GM10248 (cell line): ENCODE measurements at regions of chr10 and their contacts with region 1.

Region 1: GRCh38 chr10:31864834-31865518 is 63.7 kb downstream of the ARHGAP12 start:
- DNase-seq: no peak
- CTCF ChIP-seq: no peak

Region 2: GRCh38 chr10:31739711-31740110 is 125.3 kb before region 1 on chr10:
- CTCF ChIA-PET with region 1: no interaction called
- POLR2A ChIA-PET with region 1: no interaction called
- DNase-seq: no peak
- CTCF ChIP-seq: no peak

Region 3: GRCh38 chr10:31851216-31851615 is 13.8 kb before region 1 on chr10:
- CTCF ChIA-PET with region 1: interaction called, 13 read pairs
- POLR2A ChIA-PET with region 1: no interaction called
- DNase-seq: no peak
- CTCF ChIP-seq: no peak

Region 4: GRCh38 chr10:31875608-31876007 is 10.6 kb after region 1 on chr10:
- CTCF ChIA-PET with region 1: interaction called, 23 read pairs
- POLR2A ChIA-PET with region 1: no interaction called
- DNase-seq: no peak
- CTCF ChIP-seq: no peak

Region 5: GRCh38 chr10:31928549-31929260 is 63.7 kb after region 1 on chr10 and contains the start of gene ARHGAP12:
- CTCF ChIA-PET with region 1: interaction called, 10 read pairs
- POLR2A ChIA-PET with region 1: no interaction called
- DNase-seq: peak; percentile 84
- CTCF ChIP-seq: no peak

Region 6: DNA sequence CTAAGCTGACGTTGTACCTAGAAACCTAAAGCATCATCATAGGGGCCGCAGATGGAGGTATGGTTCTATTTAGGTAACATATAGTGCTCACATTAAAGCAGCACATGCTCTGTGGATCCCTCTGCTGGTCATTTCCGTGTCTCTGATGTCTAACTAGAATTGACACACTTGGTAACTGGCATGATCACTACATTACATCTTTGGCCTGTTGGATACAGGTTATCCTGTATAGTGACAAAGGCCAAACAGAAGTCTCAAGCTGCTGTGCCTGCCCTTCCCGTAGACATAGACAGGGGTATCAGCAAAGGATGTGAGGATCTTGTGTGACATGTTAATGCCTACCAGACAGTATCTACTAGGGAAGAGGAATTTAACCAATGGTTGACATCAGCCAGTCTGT is 140.1 kb after region 1 on chr10:
- CTCF ChIA-PET with region 1: interaction called, 21 read pairs
- POLR2A ChIA-PET with region 1: no interaction called
- DNase-seq: peak; percentile 34
- CTCF ChIP-seq: peak; percentile 50